ENCODE measurements at regions of chr9 and their contacts with region 1.

Region 1: GRCh38 chr9:85716031-85716877 is 25.5 kb downstream of the AGTPBP1 start:
- DNase-seq: peak; percentile 35
- CTCF ChIP-seq: peak; percentile 38

Region 2: GRCh38 chr9:85554349-85554748 is 161.9 kb before region 1 on chr9:
- CTCF ChIA-PET with region 1: no interaction called
- POLR2A ChIA-PET with region 1: no interaction called
- DNase-seq: peak; percentile 17
- CTCF ChIP-seq: no peak

Region 3: GRCh38 chr9:85662573-85662972 is 53.7 kb before region 1 on chr9:
- CTCF ChIA-PET with region 1: no interaction called
- POLR2A ChIA-PET with region 1: no interaction called
- DNase-seq: no peak
- CTCF ChIP-seq: no peak

Region 4: GRCh38 chr9:85702726-85703289 is 13.4 kb before region 1 on chr9:
- CTCF ChIA-PET with region 1: interaction called, 18 read pairs
- POLR2A ChIA-PET with region 1: interaction called, 3 read pairs
- DNase-seq: no peak
- CTCF ChIP-seq: no peak

Region 5: DNA sequence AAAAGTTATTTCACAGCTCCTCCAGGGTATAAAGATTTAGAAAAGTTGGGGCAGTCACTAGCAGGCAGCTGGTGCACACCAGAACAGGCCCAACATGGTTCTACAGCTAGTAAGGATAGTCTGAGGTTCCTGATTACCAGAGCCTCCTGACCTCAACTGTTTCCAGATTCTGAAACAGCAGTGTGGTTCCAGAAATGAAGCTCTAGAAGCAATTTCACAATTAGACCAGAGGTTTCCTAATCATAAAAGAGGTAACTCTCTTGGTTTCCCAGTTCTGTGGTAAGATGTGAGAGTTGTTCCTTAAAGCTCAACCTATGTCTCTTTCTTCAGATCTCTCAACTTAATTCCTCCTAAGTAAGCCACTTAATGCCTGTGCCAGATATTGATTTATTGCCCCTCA is 13.6 kb after region 1 on chr9:
- CTCF ChIA-PET with region 1: interaction called, 19 read pairs
- POLR2A ChIA-PET with region 1: no interaction called
- DNase-seq: no peak
- CTCF ChIP-seq: no peak